AG04449 (cell line): ENCODE measurements at regions of chr7 and their contacts with region 1.

Region 1: GRCh38 chr7:149624419-149625339 is 127.1 kb upstream of the ZNF746 start:
- DNase-seq: peak; percentile 31
- H3K4me3 ChIP-seq: peak overlapping the region; percentile 91
- CTCF ChIP-seq: peak; percentile 92

Region 2: GRCh38 chr7:149497456-149498261 is 127.0 kb before region 1 on chr7 and contains the start of gene ZNF746:
- CTCF ChIA-PET with region 1: interaction called, 11 read pairs
- POLR2A ChIA-PET with region 1: interaction called, 4 read pairs
- DNase-seq: no peak
- H3K4me3 ChIP-seq: peak within 1 kb of the TSS; percentile 73
- CTCF ChIP-seq: peak; percentile 86

Region 3: GRCh38 chr7:149604521-149604920 is 20.2 kb before region 1 on chr7:
- CTCF ChIA-PET with region 1: interaction called, 14 read pairs
- POLR2A ChIA-PET with region 1: no interaction called
- DNase-seq: no peak
- H3K4me3 ChIP-seq: no peak overlapping the region
- CTCF ChIP-seq: no peak

Region 4: DNA sequence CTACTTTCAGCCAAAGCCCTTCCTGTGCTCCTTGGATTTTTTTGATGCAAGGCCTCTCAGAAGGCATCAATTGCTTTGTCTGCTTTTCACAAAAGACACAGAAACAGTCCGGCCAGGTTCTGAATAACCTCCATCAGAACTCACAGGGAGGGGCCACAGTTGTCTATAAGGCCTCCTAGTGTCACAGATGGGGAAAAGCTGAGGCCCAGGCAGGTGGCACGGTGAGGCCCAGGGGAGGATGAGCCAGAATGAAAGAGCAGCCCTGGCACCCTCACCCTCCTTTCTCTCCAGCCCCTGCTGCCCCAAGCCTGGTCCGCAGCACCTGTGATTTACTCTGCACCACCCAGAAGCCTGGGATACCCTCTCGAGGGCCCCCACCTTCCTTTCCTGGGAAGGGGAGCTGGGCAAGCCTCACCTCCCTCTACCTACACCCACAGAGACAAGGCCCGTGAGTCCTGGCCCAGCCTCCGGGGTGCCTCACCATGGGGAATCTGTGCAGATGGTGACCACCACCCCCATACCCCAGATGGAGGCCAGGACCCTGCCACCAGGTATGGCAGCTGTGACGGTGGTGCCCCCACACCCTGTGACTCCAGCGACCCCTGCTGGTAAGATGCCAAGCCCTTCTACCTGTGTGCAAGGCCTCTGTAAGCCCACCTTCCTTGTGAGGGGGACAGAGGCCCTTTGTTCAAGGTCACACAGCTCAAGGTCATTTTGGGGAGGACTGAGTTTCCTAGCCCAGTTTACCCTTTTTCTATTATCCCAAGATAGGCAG is 174.9 kb after region 1 on chr7:
- CTCF ChIA-PET with region 1: no interaction called
- POLR2A ChIA-PET with region 1: no interaction called
- DNase-seq: no peak
- H3K4me3 ChIP-seq: no peak overlapping the region
- CTCF ChIP-seq: no peak